ENCODE measurements at regions of chr16 and their contacts with region 1.

Region 1: GRCh38 chr16:67279296-67280089 is at the start of gene PLEKHG4:
- DNase-seq: peak; percentile 62 to 89 (median 72)
- ATAC-seq: peak; percentile 38 to 90 (median 82)
- H3K4me3 ChIP-seq: peak within 1 kb of the TSS; percentile 3 to 69 (median 55)
- H3K27ac ChIP-seq: peak within 1 kb of the TSS in 3 of 12 donors; percentile 24 to 60 (median 48)
- H3K4me1 ChIP-seq: peaks cover 0 to 26% (median 7%) of the 10 kb centered on the region in 12 donors
- H3K27me3 ChIP-seq: peaks cover 0 to 3% (median 0%) of the 10 kb centered on the region in 9 donors
- CTCF ChIP-seq: peak; percentile 24 to 81 (median 64)
- POLR2A ChIP-seq: no peak
- total RNA-seq, gene PLEKHG4: 0.44 to 4.0 (median 0.94) TPM

Region 2: DNA sequence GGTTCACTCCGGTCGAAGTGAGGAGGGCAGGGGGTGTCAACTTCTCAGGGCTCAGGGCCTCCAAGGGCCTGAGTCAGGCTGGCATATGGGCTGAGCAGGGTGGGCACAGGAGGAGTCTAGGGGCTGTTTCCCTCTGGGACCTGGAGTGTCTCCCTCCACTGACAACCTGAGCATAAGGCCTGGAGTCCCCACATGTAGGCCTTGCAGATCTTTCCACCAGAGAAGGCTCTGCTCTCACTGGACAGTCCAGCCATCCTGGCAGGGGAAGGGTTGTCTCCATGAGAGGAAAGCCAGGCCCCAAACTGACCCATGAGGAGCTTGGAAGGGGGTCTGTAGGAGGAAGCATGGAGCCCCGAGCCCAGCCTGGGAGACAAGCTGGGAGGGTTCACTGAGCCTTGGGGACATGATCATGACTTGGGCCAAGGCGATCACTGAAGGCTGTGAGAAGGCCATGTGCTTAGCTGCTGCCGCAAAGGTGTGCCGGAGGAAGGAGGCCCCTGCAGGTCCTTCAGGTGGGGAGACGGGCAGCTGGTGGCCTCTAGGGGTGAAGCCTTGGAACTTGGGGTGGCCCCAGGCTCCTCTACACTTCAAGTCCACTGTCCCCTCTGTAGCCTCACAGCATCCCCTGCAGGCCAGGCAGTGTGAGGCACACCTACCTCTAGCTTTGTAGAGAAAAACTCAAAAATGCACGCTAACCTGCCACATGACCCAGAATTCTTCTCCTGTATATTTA is 690.3 kb before region 1 on chr16:
- intact Hi-C with region 1: no loop called
- DNase-seq: peak in 2 of 5 donors; percentile 49 to 51
- ATAC-seq: peak in 3 of 4 donors; percentile 34 to 87 (median 74)
- H3K4me3 ChIP-seq: no peak overlapping the region
- H3K27ac ChIP-seq: no peak overlapping the region
- H3K4me1 ChIP-seq: peaks cover 0 to 50% (median 6%) of the 10 kb centered on the region in 12 donors
- H3K27me3 ChIP-seq: no peaks in the 10 kb centered on the region
- CTCF ChIP-seq: peak; percentile 13 to 79 (median 38)
- POLR2A ChIP-seq: no peak

Region 3: GRCh38 chr16:67393035-67393787 is 113.7 kb after region 1 on chr16 and contains the start of gene TPPP3:
- intact Hi-C with region 1: loop called in 4 of 10 experiments (anchors 5 to 10 kb)
- DNase-seq: peak; percentile 92 to 95 (median 94)
- ATAC-seq: peak; percentile 70 to 84 (median 80)
- H3K4me3 ChIP-seq: peak within 1 kb of the TSS; percentile 14 to 67 (median 54)
- H3K27ac ChIP-seq: peak within 1 kb of the TSS in 11 of 12 donors; percentile 12 to 82 (median 69)
- H3K4me1 ChIP-seq: peaks cover 5 to 75% (median 50%) of the 10 kb centered on the region in 12 donors
- H3K27me3 ChIP-seq: peaks cover 0 to 28% (median 5%) of the 10 kb centered on the region in 9 donors
- CTCF ChIP-seq: peak; percentile 50 to 88 (median 70)
- POLR2A ChIP-seq: no peak
- total RNA-seq, gene TPPP3: 7.0 to 17.0 (median 10.2) TPM

Region 4: DNA sequence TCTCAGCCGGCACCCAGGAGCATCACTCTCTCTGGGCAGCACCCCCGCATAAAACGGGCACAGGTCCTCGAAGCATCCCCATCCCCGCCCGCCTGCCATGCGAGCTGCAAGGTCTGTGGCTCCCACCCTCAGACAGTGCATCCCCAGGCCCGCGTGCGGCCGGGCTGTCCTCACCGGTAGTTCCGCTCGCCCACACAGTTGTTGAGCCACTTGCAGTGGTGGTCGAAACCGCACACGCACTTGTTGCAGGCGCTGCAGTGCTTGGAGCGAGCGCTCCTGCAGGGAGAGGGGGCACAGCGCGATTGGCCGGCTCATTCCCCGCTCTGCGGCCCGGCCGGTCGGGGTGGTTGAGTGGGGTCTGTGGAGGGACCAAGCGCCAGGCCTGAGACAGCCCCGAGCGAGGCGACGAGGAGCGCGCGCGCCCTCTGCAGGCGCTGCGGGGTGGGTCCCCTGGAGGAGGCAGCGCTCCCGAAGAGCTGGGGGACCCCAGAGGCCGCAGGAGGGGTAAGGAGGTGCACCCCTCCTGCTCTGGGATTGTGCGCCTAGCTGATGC is 119.8 kb after region 1 on chr16:
- intact Hi-C with region 1: loop called in 4 of 10 experiments (anchors 5 to 10 kb)
- DNase-seq: peak in 3 of 5 donors; percentile 45 to 82 (median 65)
- ATAC-seq: peak in 3 of 4 donors; percentile 40 to 46 (median 45)
- H3K4me3 ChIP-seq: peak overlapping the region in 7 of 12 donors; percentile 8 to 40 (median 27)
- H3K27ac ChIP-seq: peak overlapping the region in 2 of 12 donors; percentile 64 to 78
- H3K4me1 ChIP-seq: peaks cover 5 to 56% (median 32%) of the 10 kb centered on the region in 12 donors
- H3K27me3 ChIP-seq: peaks cover 0 to 13% (median 0%) of the 10 kb centered on the region in 9 donors
- CTCF ChIP-seq: peak; percentile 65 to 86 (median 74)
- POLR2A ChIP-seq: no peak